Activated CD4-positive, alpha-beta T cell treated with anti-CD3 and anti-CD28 coated beads, Interleukin-2, amount 10 ng/mL, durations not matched to agents 7 days and 5 days (primary cell): ENCODE measurements at regions of chr4 and their contacts with region 1.

Region 1: DNA sequence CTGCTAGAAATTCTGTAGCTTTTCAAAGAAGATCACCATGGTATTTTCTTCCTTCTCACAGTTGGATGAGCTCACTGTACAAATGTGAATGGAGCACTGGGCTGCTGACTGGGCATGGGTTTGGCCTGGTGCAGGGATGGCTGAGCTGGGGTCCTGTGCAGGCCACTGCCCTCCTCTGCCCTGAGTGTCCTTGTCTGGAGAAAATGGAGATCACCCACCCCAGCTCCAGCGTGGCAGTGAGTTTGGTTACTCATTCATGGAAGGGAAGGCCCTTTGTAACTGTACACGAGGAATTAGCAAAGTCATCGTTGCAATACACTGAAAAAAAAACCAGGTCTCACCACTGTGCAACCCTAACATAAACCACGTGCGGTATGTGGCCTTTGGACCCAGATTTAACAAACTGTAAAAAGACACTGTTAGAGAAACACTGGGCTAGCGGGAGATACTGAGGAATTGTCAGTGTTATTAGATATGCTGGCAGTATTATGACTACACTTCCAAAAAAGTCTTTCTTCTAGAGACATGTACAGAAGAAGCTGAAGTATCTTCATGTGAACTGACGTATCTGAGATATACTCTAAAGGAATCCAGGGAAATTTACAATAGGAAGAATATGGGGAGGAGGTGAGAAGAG is 16.1 kb upstream of the TBC1D14 start:
- DNase-seq: no peak
- H3K4me3 Mint-ChIP-seq: no peak overlapping the region
- H3K27ac Mint-ChIP-seq: peak overlapping the region; percentile 74
- H3K4me1 Mint-ChIP-seq: peaks cover 38% of the 10 kb centered on the region
- H3K27me3 Mint-ChIP-seq: no peaks in the 10 kb centered on the region

Region 2: DNA sequence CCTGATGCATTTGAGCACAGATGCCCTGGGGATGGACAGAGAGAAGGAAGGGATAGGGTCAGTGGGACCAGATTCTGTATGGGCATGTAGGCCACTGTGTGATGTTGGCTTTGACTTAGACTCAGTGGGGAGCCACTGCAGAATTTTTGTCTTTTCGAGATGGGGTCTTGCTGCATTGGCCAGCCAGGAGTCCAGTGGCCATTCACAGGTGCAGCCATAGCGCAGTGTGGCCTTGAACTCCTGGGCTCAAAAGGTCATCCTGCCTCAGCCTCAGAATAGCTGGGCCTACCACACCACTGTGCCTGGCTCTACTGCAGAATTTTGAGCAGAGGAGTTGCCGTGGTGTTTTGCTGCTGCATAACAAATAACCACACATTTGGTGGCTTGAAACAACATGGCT is 38.9 kb after region 1 on chr4:
- CTCF ChIA-PET with region 1: interaction called, 4 read pairs
- POLR2A ChIA-PET with region 1: interaction called, 15 read pairs
- DNase-seq: no peak
- H3K4me3 Mint-ChIP-seq: no peak overlapping the region
- H3K27ac Mint-ChIP-seq: no peak overlapping the region
- H3K4me1 Mint-ChIP-seq: peaks cover 51% of the 10 kb centered on the region
- H3K27me3 Mint-ChIP-seq: no peaks in the 10 kb centered on the region